ENCODE measurements at regions of chr1 and their contacts with region 1.

Region 1: DNA sequence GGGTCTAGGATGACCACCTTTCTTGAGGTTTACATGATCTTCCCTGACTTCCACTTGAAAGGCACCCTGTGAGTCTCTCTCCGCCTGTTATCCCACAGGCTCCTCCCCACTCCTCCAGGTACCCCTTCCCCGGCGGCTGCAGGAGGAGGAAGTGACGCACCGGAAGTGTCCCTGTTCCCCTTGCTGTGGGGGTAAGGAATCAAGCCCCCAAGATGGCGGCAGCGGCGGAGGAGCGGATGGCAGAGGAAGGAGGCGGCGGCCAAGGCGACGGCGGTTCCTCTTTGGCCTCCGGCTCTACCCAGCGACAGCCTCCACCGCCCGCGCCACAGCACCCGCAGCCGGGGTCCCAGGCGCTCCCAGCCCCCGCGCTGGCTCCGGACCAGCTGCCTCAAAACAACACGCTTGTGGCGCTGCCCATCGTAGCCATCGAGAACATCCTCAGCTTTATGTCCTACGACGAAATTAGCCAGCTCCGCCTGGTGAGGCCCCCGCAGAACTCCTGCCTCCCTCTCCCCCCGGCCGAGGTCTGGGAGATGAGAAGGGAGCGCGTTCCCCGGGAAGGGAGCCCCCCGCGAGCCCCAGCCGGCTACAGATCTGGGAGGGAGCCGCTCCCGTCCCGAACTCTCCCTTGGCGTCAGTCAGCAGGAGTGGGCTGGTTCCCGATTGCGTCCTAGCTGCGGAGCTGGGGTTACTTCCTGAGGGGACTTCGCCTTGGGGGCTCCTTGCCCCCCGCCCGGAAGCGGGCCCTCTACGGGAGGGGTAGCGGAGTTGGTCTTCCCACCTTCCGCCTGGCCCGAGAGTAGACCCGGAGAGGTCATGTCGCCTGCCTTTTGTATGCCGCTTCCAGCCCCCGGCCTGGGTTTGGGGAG is at the start of gene FBXO28:
- DNase-seq: peak; percentile 95
- H3K4me3 ChIP-seq: peak within 1 kb of the TSS; percentile 81 to 99 (median 83)
- H3K27ac ChIP-seq: peak within 1 kb of the TSS; percentile 92 to 96 (median 94)
- H3K4me1 ChIP-seq: peaks cover 12 to 27% (median 20%) of the 10 kb centered on the region in 4 donors
- H3K27me3 ChIP-seq: peaks cover 3% of the 10 kb centered on the region
- CTCF ChIP-seq: no peak
- EP300 ChIP-seq: no peak
- POLR2A ChIP-seq: peak; percentile 89
- total RNA-seq, gene FBXO28: 7.0 to 31.0 (median 26.4) TPM

Region 2: GRCh38 chr1:224300314-224300713 is 186.2 kb after region 1 on chr1:
- in situ Hi-C with region 1: loop called in 1 of 4 experiments (anchors 25 kb)
- intact Hi-C with region 1: no loop called
- DNase-seq: no peak
- H3K4me3 ChIP-seq: no peak overlapping the region
- H3K27ac ChIP-seq: no peak overlapping the region
- H3K4me1 ChIP-seq: peaks cover 0 to 13% (median 3%) of the 10 kb centered on the region in 4 donors
- H3K27me3 ChIP-seq: no peaks in the 10 kb centered on the region
- CTCF ChIP-seq: no peak
- EP300 ChIP-seq: no peak
- POLR2A ChIP-seq: no peak

Region 3: DNA sequence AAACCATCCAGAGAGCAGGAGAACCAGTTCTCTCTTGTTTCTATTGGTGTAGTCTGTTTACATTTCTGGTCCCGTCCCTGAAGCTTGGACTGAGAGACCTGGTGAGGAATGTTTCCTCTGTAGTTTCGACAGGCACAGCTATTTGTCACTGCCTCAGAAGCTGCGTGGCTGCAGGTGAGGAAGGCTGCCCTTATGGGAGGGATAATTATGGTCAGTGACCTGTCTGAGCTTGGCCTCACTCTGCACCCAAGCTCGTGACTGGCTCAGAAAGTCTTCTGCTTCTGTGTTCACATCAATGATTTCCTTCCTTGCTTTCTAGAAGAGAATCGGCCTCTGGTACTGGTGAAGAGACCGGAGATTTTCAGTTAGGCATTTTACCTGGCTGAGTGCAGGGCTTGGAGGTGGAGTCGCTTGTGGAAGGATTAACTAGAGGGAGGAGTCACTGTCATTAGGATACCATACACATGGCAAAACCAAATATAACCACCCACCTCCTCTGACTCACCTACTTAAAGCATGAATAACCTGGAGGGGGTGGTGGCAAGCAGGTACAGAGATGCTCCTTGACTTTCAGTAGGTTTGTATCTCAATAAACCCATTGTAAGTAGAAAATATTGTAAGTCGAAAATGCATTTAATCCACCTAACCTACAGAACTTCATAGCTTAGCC is 340.4 kb after region 1 on chr1:
- in situ Hi-C with region 1: loop called in 1 of 4 experiments (anchors 10 kb)
- intact Hi-C with region 1: no loop called
- DNase-seq: peak; percentile 59
- H3K4me3 ChIP-seq: peak overlapping the region in 2 of 4 donors; percentile 10 to 16
- H3K27ac ChIP-seq: peak overlapping the region; percentile 61 to 86 (median 77)
- H3K4me1 ChIP-seq: peaks cover 23 to 45% (median 33%) of the 10 kb centered on the region in 4 donors
- H3K27me3 ChIP-seq: no peaks in the 10 kb centered on the region
- CTCF ChIP-seq: no peak
- EP300 ChIP-seq: no peak
- POLR2A ChIP-seq: peak; percentile 45